ENCODE measurements at regions of chr20 and their contacts with region 1.

Region 1: GRCh38 chr20:35883778-35884540 is 70.3 kb downstream of the SCAND1 start:
- DNase-seq: peak; percentile 99
- ATAC-seq: peak; percentile 86
- H3K4me3 ChIP-seq: peak overlapping the region; percentile 39; the same call in 1 of the 2 replicates
- H3K27ac ChIP-seq: peak overlapping the region; percentile 97
- H3K4me1 ChIP-seq: peaks cover 41% of the 10 kb centered on the region
- H3K27me3 ChIP-seq: no peaks in the 10 kb centered on the region
- CTCF ChIP-seq: peak; percentile 92

Region 2: DNA sequence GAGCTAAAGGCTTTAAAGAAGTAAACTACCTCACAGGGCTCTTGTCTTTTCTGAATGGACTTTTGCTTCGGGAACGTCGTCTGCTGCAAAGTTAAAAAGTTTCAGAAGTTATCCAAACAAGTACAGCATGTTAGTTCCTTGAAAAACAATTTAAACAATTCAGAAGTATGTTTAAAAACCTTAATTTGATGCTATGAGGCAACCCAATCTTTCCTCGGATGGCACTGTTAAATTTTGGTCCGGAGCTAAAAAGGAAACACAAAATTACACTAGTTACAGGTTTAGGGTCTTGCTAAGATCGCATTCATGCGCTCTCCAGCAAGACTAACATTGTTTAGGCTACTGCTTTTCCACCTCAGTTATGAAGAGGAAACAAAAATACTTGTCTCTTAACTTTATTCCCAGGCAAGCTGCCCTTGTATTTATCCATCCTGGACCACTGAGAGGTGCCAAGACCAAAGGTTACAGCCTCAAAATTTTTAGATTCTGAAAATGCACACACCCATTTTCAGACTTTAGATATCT is 154.6 kb before region 1 on chr20:
- CTCF ChIA-PET with region 1: interaction called, 11 read pairs
- POLR2A ChIA-PET with region 1: no interaction called
- intact Hi-C with region 1: no loop called
- DNase-seq: no peak
- ATAC-seq: no peak
- H3K4me3 ChIP-seq: no peak overlapping the region
- H3K27ac ChIP-seq: no peak overlapping the region
- H3K4me1 ChIP-seq: no peaks in the 10 kb centered on the region
- H3K27me3 ChIP-seq: no peaks in the 10 kb centered on the region
- CTCF ChIP-seq: no peak

Region 3: GRCh38 chr20:35771689-35772562 is 112.0 kb before region 1 on chr20 and contains the start of gene PHF20:
- CTCF ChIA-PET with region 1: interaction called, 3 read pairs
- POLR2A ChIA-PET with region 1: interaction called, 7 read pairs
- intact Hi-C with region 1: loop called (anchors 1 kb)
- DNase-seq: peak; percentile 93
- ATAC-seq: peak; percentile 93
- H3K4me3 ChIP-seq: peak within 1 kb of the TSS; percentile 88
- H3K27ac ChIP-seq: no peak within 1 kb of the TSS; the same call in 1 of the 2 replicates
- H3K4me1 ChIP-seq: peaks cover 33% of the 10 kb centered on the region
- H3K27me3 ChIP-seq: no peaks in the 10 kb centered on the region
- CTCF ChIP-seq: no peak
- total RNA-seq, gene PHF20: 37.2 and 56.3 TPM in 2 replicates

Region 4: DNA sequence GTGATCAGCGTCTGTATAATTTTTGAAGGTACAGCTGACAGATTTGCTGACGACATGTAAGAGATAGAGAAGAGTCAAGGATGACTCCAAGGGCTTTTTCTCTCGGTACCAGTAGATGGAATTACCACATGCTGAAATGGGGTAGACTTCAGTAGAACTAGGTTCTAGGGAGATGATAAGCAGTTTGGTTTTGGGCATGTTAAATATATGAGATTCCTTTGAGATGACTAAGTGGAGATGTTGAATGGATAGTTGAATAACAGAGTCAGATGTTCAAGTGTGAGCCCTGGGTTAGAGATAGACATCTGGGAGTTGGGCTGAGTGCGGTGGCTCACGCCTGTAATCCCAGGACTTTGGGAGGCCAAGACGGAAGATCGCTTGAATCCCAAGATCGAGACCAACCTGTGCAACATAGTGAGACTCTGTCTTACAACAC is 62.1 kb before region 1 on chr20:
- CTCF ChIA-PET with region 1: no interaction called
- POLR2A ChIA-PET with region 1: no interaction called
- intact Hi-C with region 1: loop called (anchors 5 kb)
- DNase-seq: peak; percentile 62
- ATAC-seq: peak; percentile 74
- H3K4me3 ChIP-seq: no peak overlapping the region
- H3K27ac ChIP-seq: no peak overlapping the region
- H3K4me1 ChIP-seq: peaks cover 27% of the 10 kb centered on the region
- H3K27me3 ChIP-seq: no peaks in the 10 kb centered on the region
- CTCF ChIP-seq: no peak

Region 5: GRCh38 chr20:35871311-35871771 is 12.6 kb before region 1 on chr20:
- CTCF ChIA-PET with region 1: interaction called, 7 read pairs
- POLR2A ChIA-PET with region 1: interaction called, 3 read pairs
- intact Hi-C with region 1: loop called (anchors 1 kb)
- DNase-seq: no peak
- ATAC-seq: no peak
- H3K4me3 ChIP-seq: no peak overlapping the region
- H3K27ac ChIP-seq: no peak overlapping the region
- H3K4me1 ChIP-seq: peaks cover 17% of the 10 kb centered on the region
- H3K27me3 ChIP-seq: no peaks in the 10 kb centered on the region
- CTCF ChIP-seq: no peak

Measured in PC-3 (cell line).